ENCODE measurements at regions of chr9 and their contacts with region 1.

Region 1: DNA sequence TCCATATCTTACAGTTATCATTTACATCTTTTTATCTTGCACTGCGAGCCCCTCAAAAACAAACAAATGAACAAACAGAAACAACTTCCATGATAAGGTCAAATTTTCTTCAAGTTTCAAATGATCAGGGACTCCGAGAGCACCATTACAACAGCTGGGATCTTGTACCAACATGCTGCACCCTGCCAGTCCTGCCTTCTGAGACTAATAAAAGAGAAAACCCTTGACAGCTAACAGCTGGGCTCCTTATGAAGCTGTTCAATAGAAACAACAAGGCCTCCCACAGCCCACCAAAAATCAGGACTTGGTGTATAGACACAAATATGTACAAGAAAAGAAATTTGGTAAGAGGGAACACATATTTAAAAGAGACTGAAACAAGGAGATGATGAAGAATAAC is 985.3 kb upstream of the DMAC1 start:
- DNase-seq: no peak
- ATAC-seq: no peak
- H3K4me3 ChIP-seq: peak overlapping the region in 1 of 2 donors; percentile 33
- H3K27ac ChIP-seq: peak overlapping the region; percentile 59 to 72
- H3K4me1 ChIP-seq: peaks cover 3 to 11% of the 10 kb centered on the region in 2 donors
- H3K27me3 ChIP-seq: no peaks in the 10 kb centered on the region

Region 2: DNA sequence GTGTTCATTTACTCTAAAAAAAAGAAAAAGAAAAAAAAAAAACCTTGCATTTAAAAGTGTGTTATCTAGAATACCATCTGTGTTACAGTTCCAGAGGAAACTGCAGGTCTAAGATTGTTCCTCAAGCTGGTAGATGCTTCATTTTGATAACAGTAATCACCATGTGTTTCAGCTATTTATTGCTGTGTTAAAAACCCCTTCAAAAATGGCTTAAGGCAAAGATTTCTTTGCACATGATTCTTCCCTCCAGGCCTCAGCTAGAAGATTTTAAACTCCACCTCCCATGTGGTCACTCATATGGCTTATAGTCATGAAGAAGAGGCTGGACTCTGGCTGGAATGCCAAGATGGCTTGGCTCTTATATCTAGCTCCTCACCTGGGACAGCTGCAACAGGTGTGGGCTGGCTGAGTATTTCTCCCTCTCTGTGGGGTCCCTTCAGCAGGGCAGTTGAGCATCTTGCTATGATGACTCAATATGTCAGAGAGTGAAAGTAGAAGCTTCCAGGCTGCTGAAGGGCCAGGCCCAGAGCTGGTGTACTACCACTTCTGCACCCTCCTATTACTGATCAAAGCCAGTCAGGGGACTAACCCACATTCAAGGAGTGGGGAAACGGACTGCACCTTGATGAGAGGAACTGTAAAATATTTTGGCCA is 64.9 kb before region 1 on chr9:
- intact Hi-C with region 1: loop called in 1 of 2 experiments (anchors 10 kb)
- DNase-seq: no peak
- ATAC-seq: peak; percentile 6
- H3K4me3 ChIP-seq: no peak overlapping the region
- H3K27ac ChIP-seq: no peak overlapping the region
- H3K4me1 ChIP-seq: peaks cover 0 to 2% of the 10 kb centered on the region in 2 donors
- H3K27me3 ChIP-seq: no peaks in the 10 kb centered on the region

Region 3: DNA sequence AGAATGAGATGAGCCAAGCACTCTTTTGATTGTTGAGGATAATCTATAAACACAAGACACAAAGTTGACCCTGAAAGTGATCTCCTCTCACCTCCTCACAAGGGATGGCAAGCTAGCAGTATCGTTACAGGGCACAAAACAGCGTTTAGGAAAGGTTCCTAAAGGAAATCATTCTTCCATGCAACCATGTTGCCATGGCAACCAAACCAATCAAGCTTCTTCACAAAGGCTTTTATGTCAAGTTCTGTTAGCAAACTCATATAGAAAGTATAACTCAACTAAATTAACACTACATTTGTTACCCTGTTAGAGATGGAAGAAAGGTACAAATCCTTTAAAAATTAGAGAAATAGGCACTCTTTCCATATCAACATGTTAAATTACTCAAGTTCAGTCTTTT is 31.5 kb after region 1 on chr9:
- intact Hi-C with region 1: no loop called
- DNase-seq: no peak
- ATAC-seq: no peak
- H3K4me3 ChIP-seq: no peak overlapping the region
- H3K27ac ChIP-seq: no peak overlapping the region
- H3K4me1 ChIP-seq: no peaks in the 10 kb centered on the region
- H3K27me3 ChIP-seq: no peaks in the 10 kb centered on the region

Region 4: GRCh38 chr9:9117866-9118265 is 333.0 kb after region 1 on chr9:
- intact Hi-C with region 1: no loop called
- DNase-seq: no peak
- ATAC-seq: no peak
- H3K4me3 ChIP-seq: no peak overlapping the region
- H3K27ac ChIP-seq: no peak overlapping the region
- H3K4me1 ChIP-seq: no peaks in the 10 kb centered on the region
- H3K27me3 ChIP-seq: no peaks in the 10 kb centered on the region

Measured in aorta (tissue), 5 donors.